Colonic mucosa (tissue), 4 donors: ENCODE measurements at regions of chr2 and their contacts with region 1.

Region 1: DNA sequence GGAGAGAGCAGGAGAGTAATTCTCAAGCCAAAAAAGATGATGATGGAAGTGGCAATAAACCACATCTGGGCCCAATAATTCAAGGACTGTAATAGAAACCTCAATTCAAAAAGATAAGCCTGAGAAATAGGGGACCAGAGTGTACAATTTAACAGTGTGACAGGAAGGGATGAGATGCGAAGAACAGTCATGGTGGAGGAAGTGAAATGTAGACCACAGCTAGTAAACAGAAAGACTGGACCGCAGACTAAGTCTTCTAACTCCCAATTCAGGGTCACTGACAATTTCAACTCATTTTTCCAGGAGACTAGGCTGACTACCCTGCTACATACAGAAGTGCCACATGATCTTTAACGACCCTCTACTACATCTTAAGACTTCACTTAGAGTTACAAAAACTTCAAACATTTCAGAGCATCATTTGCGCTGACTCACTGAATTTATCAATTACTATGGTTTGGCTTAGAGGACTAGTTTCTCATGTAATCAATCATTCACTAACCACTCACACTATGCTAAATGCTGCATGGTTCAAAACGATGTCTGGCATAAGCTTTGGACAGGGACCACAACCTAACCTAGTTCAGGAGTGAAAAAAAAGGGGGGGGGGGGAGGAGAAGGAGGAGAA is 9.0 kb downstream of the CUL3 start:
- DNase-seq: no peak
- H3K4me3 ChIP-seq: no peak overlapping the region
- H3K27ac ChIP-seq: no peak overlapping the region
- H3K4me1 ChIP-seq: peaks cover 13% of the 10 kb centered on the region
- H3K27me3 ChIP-seq: no peaks in the 10 kb centered on the region
- CTCF ChIP-seq: no peak

Region 2: DNA sequence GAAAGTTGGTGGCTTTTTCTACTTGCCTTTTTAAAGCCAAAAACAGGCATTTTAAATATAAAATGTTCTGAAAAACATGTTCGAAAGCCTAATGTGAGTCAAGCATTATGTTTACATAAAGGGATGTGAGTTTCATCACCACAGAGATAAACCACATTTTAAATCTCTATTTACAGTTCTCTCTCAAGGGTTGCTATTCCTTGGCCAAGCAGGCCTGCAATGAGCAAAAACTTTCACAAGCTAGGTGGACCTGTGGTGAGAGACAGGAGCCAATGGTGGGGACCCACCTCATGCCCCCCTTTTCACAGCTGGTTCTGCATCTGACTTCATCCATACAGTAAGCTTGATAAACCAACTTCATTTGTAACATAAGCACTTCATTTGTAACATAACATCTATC is 56.1 kb before region 1 on chr2:
- intact Hi-C with region 1: loop called (anchors 10 kb)
- DNase-seq: no peak
- H3K4me3 ChIP-seq: no peak overlapping the region
- H3K27ac ChIP-seq: no peak overlapping the region
- H3K4me1 ChIP-seq: no peaks in the 10 kb centered on the region
- H3K27me3 ChIP-seq: no peaks in the 10 kb centered on the region
- CTCF ChIP-seq: no peak